Mammary epithelial cell (primary cell): ENCODE measurements at regions of chr12 and their contacts with region 1.

Region 1: DNA sequence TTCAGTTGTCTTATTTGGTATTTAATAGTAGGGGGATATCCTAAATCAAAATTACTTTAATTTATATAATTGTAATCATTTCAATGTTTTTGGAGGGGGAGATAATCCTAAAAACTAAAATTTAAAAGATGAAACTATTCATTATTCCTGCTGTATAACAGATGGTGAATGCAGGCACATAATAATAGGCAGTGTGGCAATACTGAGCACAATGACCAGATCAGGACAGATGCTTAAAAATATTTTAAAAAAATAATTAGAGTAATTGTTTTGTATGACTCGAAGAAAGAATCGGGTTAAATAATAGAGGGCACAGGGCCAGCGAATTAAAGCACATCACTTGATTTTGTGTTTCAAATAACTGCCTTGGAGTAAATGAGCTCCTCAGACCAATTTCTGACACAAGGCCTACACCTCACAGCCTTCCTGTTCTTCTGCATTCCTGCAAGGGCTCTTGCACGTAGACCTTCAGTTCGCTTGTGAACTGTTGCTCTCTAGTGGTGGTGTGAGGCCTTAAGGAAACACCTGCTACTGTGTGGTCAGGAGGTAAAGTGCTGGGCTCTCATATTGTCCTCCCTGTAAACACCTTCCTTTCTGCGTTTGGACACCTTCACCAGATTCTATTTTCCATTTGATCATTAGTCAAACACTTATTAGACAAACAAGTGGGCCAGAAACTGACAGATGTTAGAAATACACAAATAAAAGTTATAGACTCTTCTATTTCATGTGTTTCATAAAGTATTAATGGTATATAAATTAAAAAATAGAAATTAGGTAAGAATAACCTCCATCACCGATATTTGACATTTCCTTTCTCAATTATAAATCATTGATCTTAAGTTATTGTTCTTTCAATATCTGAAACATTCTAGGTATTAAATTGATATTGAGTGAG is 29.3 kb upstream of the KLRF1 start:
- DNase-seq: peak; percentile 80
- H3K4me3 ChIP-seq: no peak overlapping the region
- H3K27ac ChIP-seq: no peak overlapping the region
- H3K4me1 ChIP-seq: no peaks in the 10 kb centered on the region
- H3K27me3 ChIP-seq: no peaks in the 10 kb centered on the region
- CTCF ChIP-seq: peak; percentile 59 to 90

Region 2: GRCh38 chr12:9378430-9378835 is 419.5 kb before region 1 on chr12:
- CTCF ChIA-PET with region 1: no interaction called
- dilution Hi-C with region 1: no loop called
- in situ Hi-C with region 1: no loop called
- intact Hi-C with region 1: loop called (anchors 2 kb)
- DNase-seq: no peak
- H3K4me3 ChIP-seq: no peak overlapping the region
- H3K27ac ChIP-seq: no peak overlapping the region
- H3K4me1 ChIP-seq: no peaks in the 10 kb centered on the region
- H3K27me3 ChIP-seq: peaks cover 2% of the 10 kb centered on the region
- CTCF ChIP-seq: peak; percentile 45 to 69

Region 3: DNA sequence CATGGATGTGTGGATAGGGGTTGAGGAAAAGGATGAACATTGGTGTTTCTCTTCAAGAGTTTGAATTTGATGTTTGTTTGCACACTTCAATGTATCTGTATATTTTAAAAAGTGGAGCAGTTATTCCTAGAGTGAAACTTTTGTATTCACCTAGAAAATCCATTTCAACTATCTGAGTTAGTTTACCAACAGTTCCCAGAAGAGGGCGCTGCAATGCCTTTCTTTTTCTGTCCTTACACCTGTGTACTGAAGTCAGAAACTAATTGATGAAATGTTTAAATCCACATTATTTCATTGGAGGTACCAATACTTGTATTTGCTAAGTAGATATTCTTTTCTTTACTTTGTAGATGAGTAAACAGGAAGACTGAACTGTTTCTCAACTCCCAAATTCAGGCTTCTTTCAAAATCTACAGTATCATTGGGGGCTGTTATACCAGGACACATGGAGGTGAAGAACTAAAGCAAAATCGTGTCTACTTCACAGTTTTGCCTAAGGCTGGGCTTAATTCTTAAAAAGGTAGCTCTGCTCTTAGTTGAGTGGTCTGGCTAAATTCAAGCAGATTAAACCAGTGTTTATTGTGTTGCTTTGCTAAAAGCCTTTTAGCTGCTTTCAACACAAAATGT is 163.7 kb before region 1 on chr12:
- CTCF ChIA-PET with region 1: no interaction called
- dilution Hi-C with region 1: no loop called
- in situ Hi-C with region 1: no loop called
- intact Hi-C with region 1: loop called (anchors 1 kb)
- DNase-seq: peak; percentile 39
- H3K4me3 ChIP-seq: no peak overlapping the region
- H3K27ac ChIP-seq: no peak overlapping the region
- H3K4me1 ChIP-seq: peaks cover 28% of the 10 kb centered on the region
- H3K27me3 ChIP-seq: no peaks in the 10 kb centered on the region
- CTCF ChIP-seq: peak; percentile 62 to 70

Region 4: DNA sequence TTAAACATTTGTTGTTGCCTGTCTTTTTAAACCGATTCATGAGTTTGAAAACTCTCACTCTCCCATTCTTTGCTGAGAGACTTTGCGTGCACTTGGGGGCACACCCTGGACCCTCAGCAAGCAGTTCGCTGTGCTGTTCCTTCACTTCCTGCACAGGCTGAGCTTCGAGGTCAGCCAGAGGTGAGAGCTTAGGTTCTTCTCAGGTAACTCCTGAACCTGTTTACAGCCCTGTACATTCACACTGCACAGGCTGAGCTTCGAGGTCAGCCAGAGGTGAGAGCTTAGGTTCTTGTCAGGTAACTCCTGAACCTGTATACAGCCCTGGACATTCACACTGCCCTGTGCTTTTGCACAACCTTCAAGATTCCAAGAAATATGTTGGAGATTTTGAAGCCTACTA is 55.3 kb before region 1 on chr12:
- CTCF ChIA-PET with region 1: no interaction called
- dilution Hi-C with region 1: loop called (anchors 5 kb)
- in situ Hi-C with region 1: no loop called
- intact Hi-C with region 1: no loop called
- DNase-seq: no peak
- H3K4me3 ChIP-seq: no peak overlapping the region
- H3K27ac ChIP-seq: no peak overlapping the region
- H3K4me1 ChIP-seq: no peaks in the 10 kb centered on the region
- H3K27me3 ChIP-seq: no peaks in the 10 kb centered on the region
- CTCF ChIP-seq: no peak

Region 5: DNA sequence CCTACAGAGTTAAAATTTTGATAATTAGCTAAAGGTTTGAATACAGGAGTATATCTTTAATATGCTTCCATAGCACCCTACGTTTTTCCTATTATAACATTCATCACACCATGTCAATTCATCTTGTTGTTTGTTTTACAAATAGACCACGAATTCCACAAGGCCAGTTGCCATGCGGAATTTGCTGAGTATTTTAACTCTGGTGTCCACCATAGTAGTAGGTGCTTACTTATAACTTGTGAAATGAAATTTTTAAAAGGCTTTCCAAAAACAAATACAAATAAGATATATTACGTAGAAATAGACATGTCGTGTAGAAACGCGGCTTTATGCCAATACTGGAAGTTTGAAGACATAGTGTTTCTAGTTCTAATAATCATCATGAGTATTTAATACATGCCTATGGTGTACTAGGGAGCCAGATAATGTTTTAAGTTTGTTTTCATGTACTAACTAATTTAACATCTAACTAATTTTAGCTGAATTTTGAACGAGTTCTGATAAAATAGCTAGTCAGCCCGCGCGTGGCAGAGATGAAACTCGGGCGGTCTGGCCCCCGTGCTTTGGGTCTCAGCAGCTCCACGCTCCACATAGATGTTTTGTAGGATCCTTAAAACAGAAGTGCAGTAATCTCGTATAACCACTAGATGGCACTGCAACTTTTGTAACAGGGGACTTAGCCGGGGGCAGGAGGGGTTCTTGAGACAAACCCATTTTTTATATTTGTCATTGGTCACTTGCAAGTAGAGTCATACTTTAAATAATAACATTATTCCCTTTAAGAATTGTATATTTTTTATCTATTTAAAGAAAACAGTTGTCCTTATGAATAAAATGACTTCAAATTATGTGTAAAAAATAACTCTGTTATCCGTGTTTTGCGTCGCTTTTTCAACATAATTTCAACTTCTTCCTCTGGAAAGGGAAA is 47.4 kb before region 1 on chr12:
- CTCF ChIA-PET with region 1: interaction called, 5 read pairs
- dilution Hi-C with region 1: loop called (anchors 5 kb)
- in situ Hi-C with region 1: no loop called
- intact Hi-C with region 1: loop called (anchors 1 kb)
- DNase-seq: peak; percentile 30
- H3K4me3 ChIP-seq: no peak overlapping the region
- H3K27ac ChIP-seq: no peak overlapping the region
- H3K4me1 ChIP-seq: no peaks in the 10 kb centered on the region
- H3K27me3 ChIP-seq: no peaks in the 10 kb centered on the region
- CTCF ChIP-seq: peak; percentile 75 to 82